Calu3 (cell line): ENCODE measurements at regions of chr18 and their contacts with region 1.

Region 1: DNA sequence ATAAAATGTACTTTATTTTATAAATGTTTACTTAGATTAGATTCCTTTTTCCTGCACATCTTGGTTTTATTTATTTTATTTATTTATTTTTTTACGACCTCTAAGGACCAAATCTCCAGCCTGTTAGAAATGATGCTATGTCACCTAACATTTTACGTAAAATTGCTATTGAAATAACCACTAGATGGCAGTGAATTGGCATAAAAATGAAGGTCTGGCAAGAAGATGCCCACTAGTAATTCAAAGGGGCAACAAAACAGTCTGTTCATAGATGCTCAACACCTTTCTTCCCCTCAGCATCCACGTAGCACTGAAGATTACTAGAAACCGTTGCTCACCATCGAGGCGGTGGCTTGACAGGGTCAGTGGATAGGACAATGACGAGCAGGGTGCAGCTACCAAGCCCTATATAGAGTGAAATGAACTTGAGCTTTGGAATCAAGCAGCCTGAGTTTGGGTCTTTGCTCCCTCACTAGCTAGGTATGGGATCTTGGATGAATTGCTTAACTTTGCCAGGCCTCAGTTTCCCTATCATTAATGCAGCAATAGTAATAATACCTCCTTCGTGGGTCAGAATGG is 128.7 kb upstream of the L3MBTL4 start:
- DNase-seq: no peak
- H3K4me3 Mint-ChIP-seq: no peak overlapping the region
- H3K27ac Mint-ChIP-seq: no peak overlapping the region
- H3K4me1 Mint-ChIP-seq: peaks cover 10% of the 10 kb centered on the region
- H3K27me3 Mint-ChIP-seq: peaks cover 28% of the 10 kb centered on the region
- CTCF ChIP-seq: peak; percentile 64

Region 2: DNA sequence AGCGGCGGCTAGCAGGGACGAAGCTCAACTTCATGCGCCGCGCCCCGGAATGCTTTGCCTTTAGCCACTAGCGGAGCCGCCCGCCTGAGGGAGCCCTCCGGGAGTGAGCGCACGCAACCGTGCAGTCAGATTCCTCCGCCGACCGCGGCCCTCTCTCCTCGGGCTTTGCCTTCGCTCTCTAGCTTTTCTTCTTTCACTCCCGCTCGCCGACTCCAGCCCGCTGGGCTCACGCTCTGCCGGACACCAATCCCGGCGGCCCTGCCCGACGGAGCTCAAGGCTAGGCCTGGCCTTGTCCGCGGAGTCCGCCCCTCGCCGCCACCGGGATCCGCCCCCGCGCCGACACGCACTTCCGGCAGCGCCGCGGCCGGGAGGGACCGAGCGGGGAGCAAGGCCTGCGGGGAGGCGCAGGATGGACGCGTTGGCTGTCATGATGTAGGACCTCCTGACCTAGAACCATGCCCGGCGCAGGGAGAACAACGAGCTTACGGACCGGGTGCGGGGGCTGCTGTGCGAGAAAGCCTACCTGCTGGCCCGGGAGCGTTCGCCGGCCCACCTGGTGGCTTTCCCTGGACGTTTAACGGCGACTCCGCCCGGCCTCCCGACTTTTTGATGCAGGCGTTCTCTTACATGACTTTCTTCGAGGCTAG is 1305.6 kb before region 1 on chr18:
- CTCF ChIA-PET with region 1: no interaction called
- intact Hi-C with region 1: no loop called
- DNase-seq: peak; percentile 90
- H3K4me3 Mint-ChIP-seq: peak overlapping the region; percentile 91
- H3K27ac Mint-ChIP-seq: peak overlapping the region; percentile 95
- H3K4me1 Mint-ChIP-seq: no peaks in the 10 kb centered on the region
- H3K27me3 Mint-ChIP-seq: no peaks in the 10 kb centered on the region
- CTCF ChIP-seq: no peak

Region 3: DNA sequence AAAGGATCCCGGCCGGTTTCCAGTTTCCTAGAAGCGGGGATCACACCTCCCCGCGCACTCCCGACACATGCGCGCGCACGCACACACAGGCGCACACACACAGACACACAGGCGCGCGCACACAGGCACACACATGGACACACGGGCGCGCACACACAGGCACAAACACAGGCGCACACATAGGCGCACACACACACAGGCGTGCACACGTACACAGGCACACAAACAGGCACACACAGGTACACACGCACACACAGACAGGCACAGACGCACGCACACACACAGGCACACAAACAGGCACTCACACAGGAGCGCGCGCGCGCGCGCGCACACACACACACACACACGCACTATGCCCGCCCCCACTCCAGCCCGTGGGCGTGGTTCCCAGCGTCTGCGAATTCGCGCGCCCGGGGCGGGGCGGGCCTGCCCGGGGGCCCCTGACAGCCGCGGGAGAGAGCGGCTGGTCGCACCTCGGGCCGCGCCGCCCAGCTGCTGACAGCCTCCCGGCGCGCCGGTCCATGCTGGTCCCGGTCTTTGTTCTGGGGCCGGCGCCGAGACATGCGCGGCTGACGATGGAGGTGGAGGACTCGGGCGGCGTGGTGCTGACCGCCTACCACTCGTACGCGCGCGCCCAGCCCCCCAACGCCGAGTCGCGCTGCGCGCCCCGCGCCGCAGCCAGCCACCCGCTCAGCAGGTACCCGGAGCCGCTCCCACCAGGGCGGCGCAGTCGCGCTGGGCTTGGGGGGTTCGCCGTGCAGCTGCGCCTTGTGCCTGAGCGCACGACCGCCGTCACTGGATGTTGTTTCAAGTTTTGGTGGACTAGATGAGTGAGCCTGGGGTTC is 186.1 kb after region 1 on chr18 and contains the start of gene ARHGAP28:
- CTCF ChIA-PET with region 1: no interaction called
- intact Hi-C with region 1: loop called (anchors 10 kb)
- DNase-seq: peak; percentile 54
- H3K4me3 Mint-ChIP-seq: peak within 1 kb of the TSS; percentile 80
- H3K27ac Mint-ChIP-seq: no peak within 1 kb of the TSS
- H3K4me1 Mint-ChIP-seq: peaks cover 7% of the 10 kb centered on the region
- H3K27me3 Mint-ChIP-seq: peaks cover 63% of the 10 kb centered on the region
- CTCF ChIP-seq: no peak
- total RNA-seq, gene ARHGAP28: not detected in 2 replicates

Region 4: DNA sequence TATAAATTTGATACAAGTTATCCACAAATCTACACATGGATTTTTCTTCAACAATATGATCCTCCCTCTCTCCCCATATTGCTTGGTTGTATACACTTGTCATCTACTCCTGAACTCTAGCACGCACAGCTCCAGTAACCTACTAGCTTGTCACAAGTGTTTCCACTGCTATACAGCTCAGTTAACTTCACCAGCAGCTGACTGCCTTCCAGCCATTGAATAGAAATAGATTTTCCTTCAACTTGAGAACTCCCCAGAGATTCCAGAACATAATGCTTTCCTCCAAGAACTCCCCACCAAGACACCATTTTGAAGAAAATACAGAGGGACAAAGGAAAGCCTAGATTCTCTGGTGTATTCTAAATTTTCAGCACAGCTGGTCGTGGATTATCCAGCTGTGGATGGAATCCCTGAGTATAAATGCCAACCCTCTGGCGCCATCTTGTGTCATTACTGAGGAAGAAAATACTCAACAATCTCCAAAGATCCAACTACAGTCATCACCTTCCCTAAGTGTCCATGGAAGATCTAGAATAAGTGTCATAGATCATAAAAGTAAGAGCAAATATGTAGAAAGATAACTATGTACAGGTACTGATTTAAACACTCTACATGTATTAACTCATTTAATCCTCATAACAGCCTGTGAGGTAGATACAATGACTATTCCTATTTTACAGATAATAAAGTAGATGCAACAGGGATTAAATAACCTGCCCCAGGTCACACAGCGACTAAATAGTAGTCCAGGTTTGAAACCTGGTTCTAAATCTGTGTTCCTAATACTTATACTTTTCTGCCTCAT is 342.8 kb after region 1 on chr18:
- CTCF ChIA-PET with region 1: interaction called, 5 read pairs
- intact Hi-C with region 1: loop called (anchors 1 kb)
- DNase-seq: peak; percentile 50
- H3K4me3 Mint-ChIP-seq: no peak overlapping the region
- H3K27ac Mint-ChIP-seq: no peak overlapping the region
- H3K4me1 Mint-ChIP-seq: no peaks in the 10 kb centered on the region
- H3K27me3 Mint-ChIP-seq: peaks cover 57% of the 10 kb centered on the region
- CTCF ChIP-seq: peak; percentile 51

Region 5: DNA sequence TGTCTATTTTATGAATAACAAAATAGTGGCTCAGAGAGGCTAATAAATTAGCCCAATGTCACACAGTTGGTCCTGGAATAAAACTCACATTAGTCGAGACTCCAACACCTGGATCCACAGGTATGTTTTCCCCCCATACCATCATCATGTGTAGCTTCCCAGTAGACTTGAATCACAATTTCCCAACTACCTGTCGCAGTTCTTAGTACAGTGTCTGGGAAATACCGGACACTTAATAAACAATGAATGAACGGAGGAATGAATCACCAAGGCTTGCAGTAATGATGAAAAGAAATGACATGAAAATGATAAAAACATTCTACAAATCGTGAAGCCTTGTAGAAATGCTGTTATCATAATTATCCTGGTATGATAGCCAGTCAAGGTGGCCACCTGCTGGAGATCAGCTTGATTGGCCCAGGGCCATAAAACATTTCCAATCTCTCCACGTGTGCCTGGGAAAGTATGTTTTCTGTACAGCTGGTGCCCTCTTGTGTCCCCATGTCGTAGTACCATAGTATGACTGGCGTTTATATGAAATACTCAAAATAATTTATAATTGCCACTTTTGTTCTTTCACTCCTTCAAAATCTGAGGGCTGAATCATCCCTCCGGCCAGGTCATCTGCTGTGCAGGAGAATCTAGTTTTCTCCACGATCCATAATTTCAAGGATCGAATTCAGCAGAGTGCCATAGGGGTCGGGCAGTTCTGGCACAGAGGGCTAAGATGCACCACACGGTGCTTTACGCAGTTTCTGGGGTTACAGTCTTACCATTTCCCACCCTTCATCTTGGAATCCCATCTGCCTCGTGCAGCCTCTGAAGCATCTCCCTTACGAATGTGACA is 478.8 kb after region 1 on chr18:
- CTCF ChIA-PET with region 1: no interaction called
- intact Hi-C with region 1: loop called (anchors 5 kb)
- DNase-seq: peak; percentile 71
- H3K4me3 Mint-ChIP-seq: no peak overlapping the region
- H3K27ac Mint-ChIP-seq: no peak overlapping the region
- H3K4me1 Mint-ChIP-seq: no peaks in the 10 kb centered on the region
- H3K27me3 Mint-ChIP-seq: peaks cover 33% of the 10 kb centered on the region
- CTCF ChIP-seq: peak; percentile 86